ENCODE measurements at regions of chr16 and their contacts with region 1.

Region 1: DNA sequence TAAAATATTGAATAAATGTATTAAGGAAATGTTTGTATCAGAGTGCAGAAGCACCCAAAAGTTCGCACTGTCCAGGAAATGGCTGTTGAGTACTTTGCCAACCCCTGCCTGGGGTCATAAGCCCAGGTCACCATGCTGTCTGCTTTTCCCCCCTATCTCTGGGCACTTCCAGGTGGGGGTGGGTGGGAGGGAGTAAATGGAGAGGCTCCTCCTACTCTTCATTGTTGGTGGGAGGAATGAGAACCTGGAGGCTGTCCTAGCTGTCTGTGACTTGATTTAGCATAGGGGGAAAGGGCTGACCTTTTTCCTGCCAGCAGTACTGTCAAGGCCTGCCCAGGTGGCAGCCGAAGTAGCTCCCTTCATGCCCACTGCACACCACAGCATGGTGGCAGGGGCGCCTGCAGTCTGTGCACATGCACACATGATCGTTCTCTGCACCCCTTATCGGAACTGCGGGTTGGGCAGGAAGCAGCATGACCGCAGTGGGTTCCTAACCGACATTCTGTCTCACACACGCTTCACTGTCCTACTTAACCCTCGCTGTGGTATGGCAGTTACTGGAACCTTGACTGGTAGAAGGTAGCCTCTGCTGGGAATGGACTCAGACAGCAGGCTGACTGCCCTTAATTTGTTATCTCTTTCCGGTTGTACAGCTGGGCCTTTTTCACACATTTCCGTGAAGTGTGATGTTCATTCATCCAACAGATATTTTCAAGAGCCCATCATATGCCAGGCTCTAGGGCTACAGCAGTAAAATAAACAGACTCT is 41.5 kb downstream of the LDHD start:
- DNase-seq: no peak
- H3K4me3 ChIP-seq: no peak overlapping the region
- H3K27ac ChIP-seq: no peak overlapping the region
- H3K4me1 ChIP-seq: no peaks in the 10 kb centered on the region
- H3K27me3 ChIP-seq: no peaks in the 10 kb centered on the region
- CTCF ChIP-seq: no peak

Region 2: GRCh38 chr16:74991593-74992403 is 83.3 kb before region 1 on chr16:
- CTCF ChIA-PET with region 1: no interaction called
- dilution Hi-C with region 1: no loop called
- in situ Hi-C with region 1: no loop called
- intact Hi-C with region 1: no loop called
- DNase-seq: no peak
- H3K4me3 ChIP-seq: no peak overlapping the region
- H3K27ac ChIP-seq: no peak overlapping the region
- H3K4me1 ChIP-seq: no peaks in the 10 kb centered on the region
- H3K27me3 ChIP-seq: no peaks in the 10 kb centered on the region
- CTCF ChIP-seq: no peak

Region 3: DNA sequence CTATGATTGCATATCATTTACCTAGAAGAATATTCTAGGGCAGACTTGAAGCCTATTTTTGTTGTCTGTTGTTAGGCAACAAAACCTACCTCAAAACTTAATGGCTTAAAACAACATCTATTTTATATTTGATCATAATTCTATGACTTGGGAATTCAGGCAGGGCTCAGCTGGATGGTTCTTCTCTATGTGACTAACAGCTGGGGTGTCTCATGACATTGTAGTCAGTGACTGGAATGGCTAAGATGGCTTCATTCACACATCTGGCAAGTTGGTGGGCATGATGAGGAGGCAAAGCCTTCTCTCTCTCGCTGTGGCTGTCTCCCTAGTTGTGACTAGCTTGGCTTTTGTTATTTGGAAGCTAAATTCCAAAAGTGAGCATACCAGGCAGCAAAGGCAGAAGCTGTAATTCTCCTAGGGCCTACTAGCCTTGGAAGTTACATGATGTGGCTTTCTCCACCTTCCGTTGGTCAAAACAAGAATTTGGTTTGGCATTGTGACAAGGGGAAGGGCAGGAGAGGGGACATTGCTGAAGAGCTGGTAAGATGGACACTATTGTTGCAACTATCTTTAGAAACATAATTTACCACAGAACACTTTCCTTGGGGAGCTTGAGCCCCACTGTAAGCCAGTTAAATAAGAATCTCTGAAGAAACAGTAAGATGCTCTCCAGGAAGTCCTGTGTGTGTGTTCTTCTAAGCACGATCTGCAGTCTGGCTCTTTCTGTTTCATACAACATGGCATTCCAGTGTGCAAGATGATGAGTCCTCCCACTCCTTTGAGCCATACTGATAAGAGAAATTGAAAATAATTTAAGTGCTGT is 36.9 kb before region 1 on chr16:
- CTCF ChIA-PET with region 1: no interaction called
- dilution Hi-C with region 1: loop called (anchors 5 kb)
- in situ Hi-C with region 1: no loop called
- intact Hi-C with region 1: no loop called
- DNase-seq: no peak
- H3K4me3 ChIP-seq: no peak overlapping the region
- H3K27ac ChIP-seq: no peak overlapping the region
- H3K4me1 ChIP-seq: peaks cover 4% of the 10 kb centered on the region
- H3K27me3 ChIP-seq: no peaks in the 10 kb centered on the region
- CTCF ChIP-seq: no peak

Region 4: DNA sequence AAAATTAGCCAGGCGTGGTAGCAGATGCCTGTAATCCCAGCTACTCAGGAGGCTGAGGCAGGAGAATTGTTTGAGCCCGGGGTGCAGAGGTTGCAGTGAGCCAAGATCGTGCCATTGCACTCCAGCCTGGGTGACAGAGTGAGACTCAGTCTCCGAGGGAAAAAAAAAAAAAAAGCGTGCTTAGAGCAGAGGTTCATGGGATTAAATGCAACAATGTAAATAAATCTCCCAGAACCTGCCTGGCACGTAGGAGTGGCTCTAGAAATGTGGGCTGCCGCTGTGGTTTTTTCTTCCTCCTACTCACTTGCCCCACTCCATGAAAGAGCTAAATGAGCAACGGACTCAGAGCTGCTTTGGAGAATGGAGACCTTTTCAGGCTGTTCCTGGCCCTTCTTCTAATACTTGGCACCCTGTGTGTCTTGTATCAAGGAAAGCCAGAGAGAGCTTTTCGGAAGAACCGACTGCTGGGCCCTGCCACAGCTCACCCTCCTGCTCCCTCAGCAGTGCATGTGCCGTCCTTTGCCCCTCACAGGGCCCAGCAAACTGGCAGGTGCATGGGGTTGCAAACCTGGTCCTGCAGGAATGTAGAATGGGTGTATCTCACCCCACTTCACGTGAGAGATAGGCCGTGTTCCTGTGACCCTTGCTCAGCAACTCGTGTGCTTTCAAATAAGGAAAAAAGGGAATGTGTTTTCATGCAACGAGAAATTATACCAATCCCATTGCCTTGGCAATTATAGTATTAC is 10.5 kb before region 1 on chr16:
- CTCF ChIA-PET with region 1: no interaction called
- dilution Hi-C with region 1: no loop called
- in situ Hi-C with region 1: no loop called
- intact Hi-C with region 1: no loop called
- DNase-seq: no peak
- H3K4me3 ChIP-seq: no peak overlapping the region
- H3K27ac ChIP-seq: no peak overlapping the region
- H3K4me1 ChIP-seq: no peaks in the 10 kb centered on the region
- H3K27me3 ChIP-seq: no peaks in the 10 kb centered on the region
- CTCF ChIP-seq: no peak

Region 5: DNA sequence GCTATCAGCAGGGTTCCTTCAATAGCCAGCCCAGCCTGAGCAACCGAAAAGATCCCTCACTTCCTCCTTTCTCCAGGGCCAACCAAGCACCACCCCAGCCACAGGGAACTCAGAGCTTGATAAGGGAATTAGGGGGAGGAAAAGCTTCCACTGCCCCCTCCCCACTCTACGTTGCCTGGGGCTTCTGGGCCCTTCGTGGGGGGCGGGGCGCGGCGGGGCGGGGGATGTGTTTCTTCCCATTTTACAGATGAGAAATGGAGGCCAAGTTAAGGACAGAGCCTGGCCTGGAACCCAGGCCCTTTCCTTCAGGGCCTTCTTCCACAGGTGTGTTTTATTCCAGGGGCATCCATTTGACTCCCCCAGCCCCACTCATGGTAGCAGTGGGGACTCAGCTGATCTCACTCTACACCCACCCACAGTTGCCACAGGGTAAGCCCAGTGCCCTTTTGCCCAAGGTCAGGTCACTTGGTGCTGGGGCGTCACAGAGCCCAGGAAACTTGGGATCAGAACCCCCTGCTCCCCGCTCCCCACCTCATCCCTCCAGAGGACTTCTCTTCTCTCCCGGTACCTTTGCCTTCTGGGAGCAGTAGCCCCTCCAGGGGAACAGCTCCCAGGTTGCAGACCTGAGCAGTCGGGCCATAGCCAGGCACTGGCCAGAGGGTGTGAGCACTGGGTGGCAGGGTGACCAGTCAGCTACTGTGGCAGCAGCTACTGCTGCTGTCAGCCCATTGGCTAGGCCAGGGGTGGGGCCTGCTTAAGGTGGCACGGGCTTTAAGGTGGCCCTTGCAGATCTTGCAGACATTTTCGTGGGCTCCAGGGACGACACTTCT is 41.2 kb after region 1 on chr16 and contains the start of gene LDHD:
- CTCF ChIA-PET with region 1: no interaction called
- dilution Hi-C with region 1: loop called (anchors 5 kb)
- in situ Hi-C with region 1: no loop called
- intact Hi-C with region 1: no loop called
- DNase-seq: peak; percentile 21
- H3K4me3 ChIP-seq: peak within 1 kb of the TSS in 1 of 3 experiments; percentile 2
- H3K27ac ChIP-seq: no peak within 1 kb of the TSS
- H3K4me1 ChIP-seq: peaks cover 9% of the 10 kb centered on the region
- H3K27me3 ChIP-seq: no peaks in the 10 kb centered on the region
- CTCF ChIP-seq: no peak
- total RNA-seq, gene LDHD: 0.50 to 1.4 TPM

Region 6: GRCh38 chr16:75169899-75170405 is 94.8 kb after region 1 on chr16:
- CTCF ChIA-PET with region 1: no interaction called
- dilution Hi-C with region 1: no loop called
- in situ Hi-C with region 1: no loop called
- intact Hi-C with region 1: no loop called
- DNase-seq: no peak
- H3K4me3 ChIP-seq: no peak overlapping the region
- H3K27ac ChIP-seq: no peak overlapping the region
- H3K4me1 ChIP-seq: no peaks in the 10 kb centered on the region
- H3K27me3 ChIP-seq: no peaks in the 10 kb centered on the region
- CTCF ChIP-seq: no peak